Caco-2 (cell line): ENCODE measurements at regions of chr10 and their contacts with region 1.

Region 1: DNA sequence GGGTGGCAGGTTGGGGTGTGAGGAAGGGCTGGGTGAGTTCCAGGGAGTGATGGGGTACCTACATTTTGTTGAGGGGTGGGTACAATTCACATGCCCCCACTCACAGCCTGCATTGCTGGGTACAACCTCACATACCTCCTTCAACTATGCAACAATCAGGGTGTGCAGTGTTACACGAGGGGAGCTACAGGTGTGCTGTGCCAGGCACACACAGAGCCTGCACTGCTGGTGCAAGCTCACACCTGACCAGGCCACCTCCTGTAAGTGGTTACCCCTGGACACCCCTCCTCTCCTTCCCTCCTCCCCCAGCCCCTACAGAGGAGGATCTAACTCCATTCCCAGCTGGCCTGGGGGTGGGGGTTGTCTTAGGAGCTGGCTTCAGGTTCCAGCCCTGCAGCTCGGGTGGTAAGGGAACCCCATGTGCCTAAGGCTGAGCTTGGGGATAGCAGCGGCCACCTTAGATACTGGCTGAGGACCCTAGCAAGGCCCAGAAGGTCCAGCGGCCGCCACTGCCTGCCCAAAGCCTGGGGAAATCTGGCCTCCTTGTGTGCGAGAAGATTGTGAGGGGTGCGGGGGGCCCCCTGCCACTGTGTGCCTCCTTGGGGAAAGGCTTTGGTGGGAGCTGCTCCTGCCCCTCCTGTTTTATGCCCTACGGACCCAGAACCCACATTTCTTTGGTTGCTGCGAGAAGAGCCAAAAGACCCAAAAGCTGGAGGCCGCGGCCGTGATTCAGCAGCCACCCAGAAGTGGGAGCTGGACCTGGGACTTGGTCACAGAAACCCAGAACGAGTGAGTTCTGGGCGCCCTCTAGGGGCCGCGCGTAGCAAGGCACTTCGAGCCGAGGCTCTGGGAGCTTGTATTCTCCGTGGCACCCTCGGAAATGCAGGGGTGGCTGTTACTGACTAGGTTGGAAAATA is 10.8 kb downstream of the TLX1 start:
- DNase-seq: peak; percentile 83 to 88
- H3K4me3 ChIP-seq: no peak overlapping the region
- H3K4me3 Mint-ChIP-seq: no peak overlapping the region
- H3K27ac Mint-ChIP-seq: no peak overlapping the region
- H3K4me1 ChIP-seq: peaks cover 9% of the 10 kb centered on the region
- H3K4me1 Mint-ChIP-seq: no peaks in the 10 kb centered on the region
- H3K27me3 ChIP-seq: no peaks in the 10 kb centered on the region
- H3K27me3 Mint-ChIP-seq: peaks cover 3% of the 10 kb centered on the region
- CTCF ChIP-seq: peak; percentile 97 to 98

Region 2: GRCh38 chr10:101042667-101043355 is 99.1 kb before region 1 on chr10:
- CTCF ChIA-PET with region 1: interaction called, 24 read pairs
- POLR2A ChIA-PET with region 1: interaction called, 3 read pairs
- intact Hi-C with region 1: loop called (anchors 1 kb)
- DNase-seq: peak; percentile 98
- H3K4me3 ChIP-seq: peak overlapping the region; percentile 40
- H3K4me3 Mint-ChIP-seq: peak overlapping the region; percentile 92
- H3K27ac Mint-ChIP-seq: peak overlapping the region; percentile 99
- H3K4me1 ChIP-seq: peaks cover 24% of the 10 kb centered on the region
- H3K4me1 Mint-ChIP-seq: peaks cover 14% of the 10 kb centered on the region
- H3K27me3 ChIP-seq: no peaks in the 10 kb centered on the region
- H3K27me3 Mint-ChIP-seq: no peaks in the 10 kb centered on the region
- CTCF ChIP-seq: no peak

Region 3: GRCh38 chr10:101060036-101060950 is 81.6 kb before region 1 on chr10:
- CTCF ChIA-PET with region 1: interaction called, 7 read pairs
- POLR2A ChIA-PET with region 1: interaction called, 5 read pairs
- intact Hi-C with region 1: loop called (anchors 1 kb)
- DNase-seq: peak; percentile 91 to 94
- H3K4me3 ChIP-seq: peak overlapping the region; percentile 76
- H3K4me3 Mint-ChIP-seq: peak overlapping the region; percentile 98
- H3K27ac Mint-ChIP-seq: peak overlapping the region; percentile 99
- H3K4me1 ChIP-seq: peaks cover 32% of the 10 kb centered on the region
- H3K4me1 Mint-ChIP-seq: peaks cover 22% of the 10 kb centered on the region
- H3K27me3 ChIP-seq: no peaks in the 10 kb centered on the region
- H3K27me3 Mint-ChIP-seq: no peaks in the 10 kb centered on the region
- CTCF ChIP-seq: peak; percentile 89 to 90

Region 4: DNA sequence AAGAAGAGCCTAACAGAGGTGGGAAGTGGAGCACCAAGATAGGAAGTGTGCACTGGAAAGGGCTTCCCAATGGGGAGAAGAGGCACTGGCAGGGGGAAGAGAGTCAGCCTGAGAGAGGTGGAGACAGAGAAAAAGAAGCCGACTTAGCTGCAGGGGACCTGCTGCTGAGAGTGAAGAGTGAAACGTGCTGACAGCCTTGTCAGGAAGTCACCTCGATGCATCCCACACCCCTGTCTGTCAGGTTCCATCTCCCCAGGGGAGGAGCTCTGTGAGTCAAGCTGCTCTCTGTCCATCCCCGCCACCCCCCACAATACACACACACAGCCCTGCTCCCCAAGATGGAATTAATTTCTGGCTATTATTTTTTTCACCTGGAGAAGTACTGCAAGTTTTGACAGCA is 66.1 kb before region 1 on chr10:
- CTCF ChIA-PET with region 1: interaction called, 35 read pairs
- POLR2A ChIA-PET with region 1: interaction called, 3 read pairs
- intact Hi-C with region 1: no loop called
- DNase-seq: no peak
- H3K4me3 ChIP-seq: no peak overlapping the region
- H3K4me3 Mint-ChIP-seq: no peak overlapping the region
- H3K27ac Mint-ChIP-seq: no peak overlapping the region
- H3K4me1 ChIP-seq: no peaks in the 10 kb centered on the region
- H3K4me1 Mint-ChIP-seq: no peaks in the 10 kb centered on the region
- H3K27me3 ChIP-seq: no peaks in the 10 kb centered on the region
- H3K27me3 Mint-ChIP-seq: peaks cover 8% of the 10 kb centered on the region
- CTCF ChIP-seq: no peak

Region 5: DNA sequence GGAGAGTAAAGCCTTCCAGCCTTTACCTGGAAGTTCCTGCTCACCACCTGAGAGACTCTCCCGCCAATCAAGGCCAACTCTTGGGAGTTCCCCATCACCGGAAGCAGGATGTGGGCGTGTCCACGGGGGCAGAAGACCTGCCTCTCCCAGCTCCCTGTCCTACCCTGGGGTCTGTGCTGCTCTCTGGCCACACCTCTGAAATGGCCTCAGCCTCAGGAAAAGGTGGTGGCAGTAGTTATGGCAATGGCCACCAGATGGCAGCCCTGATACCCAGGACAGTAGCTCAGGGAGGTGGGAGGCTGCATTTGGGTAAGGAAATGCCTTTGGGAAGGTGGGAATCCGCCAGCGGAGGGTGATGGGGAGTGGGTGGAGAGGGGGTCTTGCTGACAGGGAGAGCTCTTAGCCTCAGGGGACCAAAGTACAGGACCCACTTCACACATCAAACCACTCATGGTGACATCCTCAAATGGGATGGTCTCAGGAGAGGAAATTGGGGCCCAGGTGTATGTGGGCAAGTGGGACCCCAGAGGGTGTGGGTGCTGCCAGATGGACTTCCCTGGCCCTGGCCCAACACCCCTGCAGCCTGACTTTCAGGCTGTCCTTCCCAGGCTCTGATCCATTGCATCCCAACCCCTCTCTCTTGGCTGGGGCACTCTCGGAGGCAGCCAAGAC is 46.2 kb before region 1 on chr10:
- CTCF ChIA-PET with region 1: interaction called, 541 read pairs
- POLR2A ChIA-PET with region 1: interaction called, 16 read pairs
- intact Hi-C with region 1: loop called (anchors 1 kb)
- DNase-seq: peak; percentile 95 to 97
- H3K4me3 ChIP-seq: no peak overlapping the region
- H3K4me3 Mint-ChIP-seq: no peak overlapping the region
- H3K27ac Mint-ChIP-seq: no peak overlapping the region
- H3K4me1 ChIP-seq: peaks cover 35% of the 10 kb centered on the region
- H3K4me1 Mint-ChIP-seq: peaks cover 32% of the 10 kb centered on the region
- H3K27me3 ChIP-seq: no peaks in the 10 kb centered on the region
- H3K27me3 Mint-ChIP-seq: no peaks in the 10 kb centered on the region
- CTCF ChIP-seq: peak; percentile 88 to 90

Region 6: GRCh38 chr10:101130984-101131961 is 10.6 kb before region 1 on chr10 and contains the start of gene TLX1:
- CTCF ChIA-PET with region 1: interaction called, 24 read pairs
- POLR2A ChIA-PET with region 1: no interaction called
- intact Hi-C with region 1: no loop called
- DNase-seq: peak; percentile 62 to 66
- H3K4me3 ChIP-seq: peak within 1 kb of the TSS; percentile 51
- H3K4me3 Mint-ChIP-seq: peak within 1 kb of the TSS; percentile 69
- H3K27ac Mint-ChIP-seq: no peak within 1 kb of the TSS
- H3K4me1 ChIP-seq: peaks cover 23% of the 10 kb centered on the region
- H3K4me1 Mint-ChIP-seq: peaks cover 12% of the 10 kb centered on the region
- H3K27me3 ChIP-seq: no peaks in the 10 kb centered on the region
- H3K27me3 Mint-ChIP-seq: no peaks in the 10 kb centered on the region
- CTCF ChIP-seq: peak in 1 of 2 experiments; percentile 21
- total RNA-seq, gene TLX1: 1.9 and 2.3 TPM in 2 replicates